ENCODE measurements at regions of chr12 and their contacts with region 1.

Region 1: GRCh38 chr12:94262228-94263010 is 114.0 kb downstream of the PLXNC1 start:
- DNase-seq: peak; percentile 44 to 88 (median 74)
- ATAC-seq: peak; percentile 90 to 93
- H3K4me3 Mint-ChIP-seq: peak overlapping the region; percentile 94 to 99 (median 98)
- H3K27ac Mint-ChIP-seq: peak overlapping the region; percentile 98 to 100 (median 99)
- H3K4me1 Mint-ChIP-seq: peaks cover 12 to 56% (median 42%) of the 10 kb centered on the region in 4 donors
- H3K27me3 Mint-ChIP-seq: no peaks in the 10 kb centered on the region

Region 2: DNA sequence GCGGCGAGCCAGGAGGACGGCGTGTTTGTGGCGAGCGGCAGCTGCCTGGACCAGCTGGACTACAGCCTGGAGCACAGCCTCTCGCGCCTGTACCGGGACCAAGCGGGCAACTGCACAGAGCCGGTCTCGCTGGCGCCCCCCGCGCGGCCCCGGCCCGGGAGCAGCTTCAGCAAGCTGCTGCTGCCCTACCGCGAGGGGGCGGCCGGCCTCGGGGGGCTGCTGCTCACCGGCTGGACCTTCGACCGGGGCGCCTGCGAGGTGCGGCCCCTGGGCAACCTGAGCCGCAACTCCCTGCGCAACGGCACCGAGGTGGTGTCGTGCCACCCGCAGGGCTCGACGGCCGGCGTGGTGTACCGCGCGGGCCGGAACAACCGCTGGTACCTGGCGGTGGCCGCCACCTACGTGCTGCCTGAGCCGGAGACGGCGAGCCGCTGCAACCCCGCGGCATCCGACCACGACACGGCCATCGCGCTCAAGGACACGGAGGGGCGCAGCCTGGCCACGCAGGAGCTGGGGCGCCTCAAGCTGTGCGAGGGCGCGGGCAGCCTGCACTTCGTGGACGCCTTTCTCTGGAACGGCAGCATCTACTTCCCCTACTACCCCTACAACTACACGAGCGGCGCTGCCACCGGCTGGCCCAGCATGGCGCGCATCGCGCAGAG is 113.2 kb before region 1 on chr12:
- POLR2A ChIA-PET with region 1: interaction called, 32 read pairs
- DNase-seq: peak in 9 of 10 donors; percentile 15 to 56 (median 41)
- ATAC-seq: peak; percentile 36 to 40
- H3K4me3 Mint-ChIP-seq: peak overlapping the region; percentile 82 to 97 (median 93)
- H3K27ac Mint-ChIP-seq: peak overlapping the region in 1 of 10 donors; percentile 57
- H3K4me1 Mint-ChIP-seq: peaks cover 17 to 49% (median 32%) of the 10 kb centered on the region in 4 donors
- H3K27me3 Mint-ChIP-seq: no peaks in the 10 kb centered on the region

Region 3: GRCh38 chr12:94207849-94208621 is 54.4 kb before region 1 on chr12:
- POLR2A ChIA-PET with region 1: interaction called, 16 read pairs
- DNase-seq: peak in 5 of 10 donors; percentile 14 to 42 (median 32)
- ATAC-seq: peak; percentile 76 to 77
- H3K4me3 Mint-ChIP-seq: peak overlapping the region; percentile 71 to 85 (median 82)
- H3K27ac Mint-ChIP-seq: peak overlapping the region; percentile 86 to 98 (median 94)
- H3K4me1 Mint-ChIP-seq: peaks cover 30 to 66% (median 50%) of the 10 kb centered on the region in 4 donors
- H3K27me3 Mint-ChIP-seq: no peaks in the 10 kb centered on the region

Measured in naive thymus-derived CD8-positive, alpha-beta T cell (primary cell).